ENCODE measurements at regions of chr15 and their contacts with region 1.

Region 1: DNA sequence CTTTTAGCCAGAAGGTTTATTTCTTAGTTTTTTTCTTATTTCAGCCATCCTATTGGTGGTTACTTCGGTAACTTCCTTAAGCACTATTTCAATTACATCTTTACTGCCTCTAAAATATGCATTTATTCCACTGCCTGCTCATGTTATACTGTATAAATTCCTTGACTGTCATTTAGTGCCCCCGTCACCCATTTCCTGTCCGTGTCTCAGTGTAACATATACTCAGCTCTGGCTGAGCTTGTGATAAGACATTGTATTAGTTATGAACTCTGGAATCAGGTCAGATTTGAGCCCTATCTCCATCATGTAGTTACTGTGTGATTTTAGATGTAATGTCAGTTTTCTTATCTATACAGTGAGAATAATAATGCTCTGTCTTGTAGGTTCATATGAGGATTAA is 24.2 kb downstream of the PIAS1 start:
- DNase-seq: no peak
- ATAC-seq: peak in 1 of 4 donors; percentile 40
- H3K4me3 ChIP-seq: no peak overlapping the region
- H3K27ac ChIP-seq: no peak overlapping the region
- H3K4me1 ChIP-seq: peaks cover 6 to 94% (median 53%) of the 10 kb centered on the region in 12 donors
- H3K27me3 ChIP-seq: no peaks in the 10 kb centered on the region
- CTCF ChIP-seq: no peak
- POLR2A ChIP-seq: no peak

Region 2: GRCh38 chr15:67311731-67312130 is 766.6 kb before region 1 on chr15:
- intact Hi-C with region 1: no loop called
- DNase-seq: no peak
- ATAC-seq: no peak
- H3K4me3 ChIP-seq: no peak overlapping the region
- H3K27ac ChIP-seq: no peak overlapping the region
- H3K4me1 ChIP-seq: no peaks in the 10 kb centered on the region
- H3K27me3 ChIP-seq: no peaks in the 10 kb centered on the region
- CTCF ChIP-seq: no peak
- POLR2A ChIP-seq: no peak

Region 3: GRCh38 chr15:68114356-68114755 is 36.0 kb after region 1 on chr15:
- intact Hi-C with region 1: loop called in 1 of 10 experiments (anchors 5 kb)
- DNase-seq: no peak
- ATAC-seq: peak in 2 of 4 donors; percentile 71
- H3K4me3 ChIP-seq: peak overlapping the region in 9 of 12 donors; percentile 29 to 53 (median 36)
- H3K27ac ChIP-seq: peak overlapping the region in 11 of 12 donors; percentile 18 to 84 (median 53)
- H3K4me1 ChIP-seq: peaks cover 0 to 51% (median 27%) of the 10 kb centered on the region in 12 donors
- H3K27me3 ChIP-seq: no peaks in the 10 kb centered on the region
- CTCF ChIP-seq: no peak
- POLR2A ChIP-seq: no peak

Region 4: GRCh38 chr15:68218847-68219798 is 140.8 kb after region 1 on chr15:
- intact Hi-C with region 1: no loop called
- DNase-seq: peak in 1 of 5 donors; percentile 5
- ATAC-seq: no peak
- H3K4me3 ChIP-seq: no peak overlapping the region
- H3K27ac ChIP-seq: no peak overlapping the region
- H3K4me1 ChIP-seq: peaks cover 0 to 39% (median 0%) of the 10 kb centered on the region in 12 donors
- H3K27me3 ChIP-seq: no peaks in the 10 kb centered on the region
- CTCF ChIP-seq: no peak
- POLR2A ChIP-seq: no peak